ENCODE measurements at regions of chr13 and their contacts with region 1.

Region 1: GRCh38 chr13:26253787-26254582 is at the start of gene CDK8:
- DNase-seq: peak; percentile 48
- ATAC-seq: peak; percentile 89
- H3K4me3 ChIP-seq: peak within 1 kb of the TSS; percentile 80
- H3K27ac ChIP-seq: peak within 1 kb of the TSS; percentile 86
- H3K4me1 ChIP-seq: no peaks in the 10 kb centered on the region
- H3K27me3 ChIP-seq: no peaks in the 10 kb centered on the region; a peak in 1 of 4 replicates
- CTCF ChIP-seq: no peak
- EP300 ChIP-seq: no peak
- POLR2A ChIP-seq: peak; percentile 87
- RAD21 ChIP-seq: no peak
- polyA plus RNA-seq, gene CDK8: 9.9 to 10.6 TPM

Region 2: DNA sequence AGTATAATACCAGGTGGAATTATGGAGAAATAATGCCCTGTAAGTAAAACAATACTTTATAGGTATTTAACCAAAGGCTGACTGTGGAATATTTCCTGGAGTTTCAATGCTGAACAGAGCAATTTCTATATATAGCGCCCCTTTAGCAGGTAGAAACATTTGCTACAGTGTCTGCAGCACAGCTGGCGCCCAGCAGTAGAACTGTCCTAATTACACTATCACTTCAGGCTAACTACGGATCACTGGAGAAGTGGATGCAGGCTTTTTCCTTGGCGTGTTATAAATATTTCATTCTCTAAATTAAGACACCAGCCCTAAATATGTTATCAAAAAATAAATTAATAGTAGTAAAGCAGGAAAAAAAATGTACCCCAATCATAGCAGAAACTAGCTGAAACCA is 205.2 kb before region 1 on chr13:
- CTCF ChIA-PET with region 1: no interaction called
- POLR2A ChIA-PET with region 1: no interaction called
- RAD21 ChIA-PET with region 1: no interaction called
- SMC1A ChIA-PET with region 1: no interaction called
- in situ Hi-C with region 1: no loop called
- intact Hi-C with region 1: no loop called
- DNase-seq: no peak
- ATAC-seq: no peak
- H3K4me3 ChIP-seq: no peak overlapping the region
- H3K27ac ChIP-seq: no peak overlapping the region
- H3K4me1 ChIP-seq: no peaks in the 10 kb centered on the region
- H3K27me3 ChIP-seq: peaks cover 4% of the 10 kb centered on the region in 2 experiments
- CTCF ChIP-seq: no peak
- EP300 ChIP-seq: no peak
- POLR2A ChIP-seq: no peak
- RAD21 ChIP-seq: no peak

Region 3: DNA sequence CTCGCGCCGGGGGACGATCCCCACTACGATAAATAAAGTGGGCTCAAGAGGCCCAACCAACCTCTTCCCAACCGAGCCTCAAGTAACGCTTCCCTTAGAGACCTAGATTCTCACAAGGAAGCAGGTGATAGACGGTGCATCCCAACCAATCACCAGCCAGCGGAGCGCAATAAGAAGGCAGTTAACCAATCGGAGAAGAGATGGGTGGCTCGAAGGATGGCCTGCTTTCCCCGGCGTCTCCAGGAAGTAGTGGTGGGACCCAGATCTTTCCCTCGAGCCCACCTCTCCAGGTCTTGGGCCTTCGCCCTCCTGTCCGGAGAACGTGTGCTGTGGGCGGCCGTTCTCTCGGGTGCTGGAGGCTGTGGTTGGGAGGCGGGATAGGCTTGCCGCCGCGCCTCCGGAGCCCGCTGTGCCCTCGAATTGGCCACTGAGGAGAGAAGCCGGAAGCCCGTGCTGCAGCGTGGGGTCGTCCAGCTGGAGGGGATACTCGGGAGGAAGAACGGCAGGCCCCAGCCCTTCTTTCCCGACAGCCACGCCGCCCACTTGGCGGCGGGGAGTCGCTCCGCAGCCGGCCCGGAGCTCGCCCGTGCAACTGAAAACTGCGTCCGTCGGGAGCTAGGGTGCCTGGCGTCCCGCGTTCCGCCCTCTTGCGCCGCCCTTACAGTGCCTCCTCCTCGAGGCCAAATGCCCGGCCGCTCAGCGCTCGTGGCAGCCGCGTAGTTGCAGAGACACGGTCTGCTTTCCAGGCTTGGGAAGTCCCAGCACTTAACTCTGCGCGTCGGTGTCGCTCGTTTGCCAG is 32.1 kb before region 1 on chr13 and contains the start of gene RNF6:
- CTCF ChIA-PET with region 1: interaction called, 4 read pairs
- POLR2A ChIA-PET with region 1: interaction called, 3 read pairs
- RAD21 ChIA-PET with region 1: no interaction called
- SMC1A ChIA-PET with region 1: interaction called, 3 read pairs
- in situ Hi-C with region 1: no loop called
- intact Hi-C with region 1: loop called (anchors 2 kb)
- DNase-seq: peak; percentile 96
- ATAC-seq: peak; percentile 98
- H3K4me3 ChIP-seq: peak within 1 kb of the TSS; percentile 86
- H3K27ac ChIP-seq: peak within 1 kb of the TSS; percentile 99
- H3K4me1 ChIP-seq: peaks cover 4% of the 10 kb centered on the region
- H3K27me3 ChIP-seq: no peaks in the 10 kb centered on the region; a peak in 1 of 4 replicates
- CTCF ChIP-seq: no peak
- EP300 ChIP-seq: no peak
- POLR2A ChIP-seq: peak; percentile 97
- RAD21 ChIP-seq: no peak
- polyA plus RNA-seq, gene RNF6: 19.0 to 26.8 TPM

Region 4: DNA sequence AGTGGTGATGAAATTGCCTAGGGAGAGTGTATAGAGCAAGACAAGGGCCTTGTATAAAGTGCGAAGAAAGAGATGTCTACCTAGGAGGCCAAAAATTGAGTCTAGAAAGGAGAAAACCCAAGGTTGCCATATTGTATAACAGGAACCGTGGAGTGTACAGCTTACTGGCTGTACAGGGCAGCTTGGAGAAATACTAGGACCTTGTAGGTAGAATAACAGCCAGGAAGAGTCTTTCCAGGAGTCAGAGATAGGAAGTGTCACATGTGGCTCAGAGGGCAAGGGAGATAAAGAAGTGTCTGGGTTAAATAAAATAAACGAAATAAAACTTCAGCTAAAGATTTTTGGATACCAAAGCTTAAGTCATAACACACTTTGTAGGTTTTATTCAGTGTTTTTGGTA is 12.3 kb after region 1 on chr13:
- CTCF ChIA-PET with region 1: interaction called, 12 read pairs
- POLR2A ChIA-PET with region 1: no interaction called
- RAD21 ChIA-PET with region 1: no interaction called
- SMC1A ChIA-PET with region 1: interaction called, 8 read pairs
- in situ Hi-C with region 1: no loop called
- intact Hi-C with region 1: no loop called
- DNase-seq: no peak
- ATAC-seq: no peak
- H3K4me3 ChIP-seq: no peak overlapping the region
- H3K27ac ChIP-seq: no peak overlapping the region
- H3K4me1 ChIP-seq: no peaks in the 10 kb centered on the region
- H3K27me3 ChIP-seq: no peaks in the 10 kb centered on the region
- CTCF ChIP-seq: no peak
- EP300 ChIP-seq: no peak
- POLR2A ChIP-seq: no peak
- RAD21 ChIP-seq: no peak

Region 5: DNA sequence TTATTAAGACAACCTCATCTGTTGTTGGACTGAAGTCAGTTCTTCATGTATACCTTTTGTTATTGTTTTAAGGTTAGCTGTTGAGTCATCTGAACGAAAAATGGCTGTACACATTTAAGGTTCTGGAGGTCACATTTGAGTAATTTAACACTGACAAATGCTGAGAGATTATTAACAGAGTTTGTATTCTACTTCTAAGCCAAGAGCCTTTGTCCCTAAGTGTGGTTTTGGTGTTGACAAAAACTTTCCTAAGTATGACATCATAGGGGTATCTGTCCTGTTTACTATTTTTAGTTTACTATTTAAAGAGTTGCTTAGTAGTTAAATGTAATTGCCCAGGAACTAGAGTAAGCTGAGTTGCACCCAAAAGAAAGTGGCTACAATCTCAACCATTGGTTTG is 71.9 kb after region 1 on chr13:
- CTCF ChIA-PET with region 1: no interaction called
- POLR2A ChIA-PET with region 1: no interaction called
- RAD21 ChIA-PET with region 1: no interaction called
- SMC1A ChIA-PET with region 1: interaction called, 3 read pairs
- in situ Hi-C with region 1: no loop called
- intact Hi-C with region 1: loop called (anchors 5 kb)
- DNase-seq: peak; percentile 13
- ATAC-seq: peak; percentile 92
- H3K4me3 ChIP-seq: no peak overlapping the region
- H3K27ac ChIP-seq: no peak overlapping the region
- H3K4me1 ChIP-seq: no peaks in the 10 kb centered on the region
- H3K27me3 ChIP-seq: no peaks in the 10 kb centered on the region
- CTCF ChIP-seq: no peak
- EP300 ChIP-seq: no peak
- POLR2A ChIP-seq: no peak
- RAD21 ChIP-seq: no peak

Measured in GM12878 (cell line).